ENCODE measurements at regions of chr12 and their contacts with region 1.

Region 1: DNA sequence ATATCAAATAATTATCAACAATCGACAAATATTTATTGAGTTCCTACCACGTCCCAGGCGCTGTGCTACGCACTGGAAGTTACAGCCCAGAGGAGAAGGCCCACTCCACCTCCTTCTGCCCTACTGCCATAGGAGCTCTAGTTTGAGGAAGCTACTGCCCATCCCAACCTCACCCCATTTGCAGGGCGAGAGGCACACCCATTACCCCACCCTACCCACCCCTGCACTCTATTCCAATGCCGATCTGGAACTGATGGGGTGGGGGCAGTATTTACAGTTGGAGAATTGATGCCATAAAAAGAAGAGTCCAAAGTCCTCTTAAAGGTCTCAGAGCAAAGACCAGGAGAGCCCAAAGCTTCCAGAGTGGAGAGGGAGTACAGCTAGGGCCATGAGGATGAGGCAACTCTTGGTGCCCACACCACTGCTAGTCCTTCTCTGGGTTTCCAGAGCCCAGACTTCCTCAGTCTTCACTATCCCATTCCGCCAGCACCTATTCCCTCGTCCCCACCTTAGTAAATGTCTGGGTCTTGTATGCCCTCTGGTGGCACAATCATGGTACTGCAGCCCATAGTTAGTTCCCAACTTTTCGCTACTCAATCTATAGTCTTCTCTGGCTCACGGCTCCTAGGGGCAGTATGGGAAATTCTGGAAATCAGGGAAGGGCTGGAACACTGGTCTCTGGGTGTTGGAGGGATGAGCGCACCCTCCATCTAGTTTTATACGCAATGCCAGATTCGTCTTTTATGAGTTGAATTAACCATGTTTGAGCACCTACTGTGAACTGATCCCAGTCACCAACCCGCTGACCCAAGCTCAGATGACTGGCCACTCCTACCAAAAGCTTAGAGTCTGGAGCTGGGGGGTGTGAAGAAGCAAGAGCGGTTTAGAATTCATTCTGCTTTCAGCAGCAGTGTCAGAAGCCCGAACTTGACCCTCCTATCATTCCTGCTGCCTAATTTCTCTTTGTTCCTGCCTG is 6.9 kb upstream of the ADCY6 start:
- DNase-seq: peak; percentile 80
- CTCF ChIP-seq: peak; percentile 91

Region 2: GRCh38 chr12:48567731-48568130 is 228.0 kb before region 1 on chr12:
- CTCF ChIA-PET with region 1: no interaction called
- POLR2A ChIA-PET with region 1: no interaction called
- DNase-seq: no peak
- CTCF ChIP-seq: no peak

Region 3: GRCh38 chr12:48750769-48751735 is 44.7 kb before region 1 on chr12:
- CTCF ChIA-PET with region 1: interaction called, 236 read pairs
- POLR2A ChIA-PET with region 1: no interaction called
- DNase-seq: no peak
- CTCF ChIP-seq: no peak

Region 4: GRCh38 chr12:48779869-48780268 is 15.9 kb before region 1 on chr12:
- CTCF ChIA-PET with region 1: interaction called, 57 read pairs
- POLR2A ChIA-PET with region 1: no interaction called
- DNase-seq: no peak
- CTCF ChIP-seq: no peak

Region 5: DNA sequence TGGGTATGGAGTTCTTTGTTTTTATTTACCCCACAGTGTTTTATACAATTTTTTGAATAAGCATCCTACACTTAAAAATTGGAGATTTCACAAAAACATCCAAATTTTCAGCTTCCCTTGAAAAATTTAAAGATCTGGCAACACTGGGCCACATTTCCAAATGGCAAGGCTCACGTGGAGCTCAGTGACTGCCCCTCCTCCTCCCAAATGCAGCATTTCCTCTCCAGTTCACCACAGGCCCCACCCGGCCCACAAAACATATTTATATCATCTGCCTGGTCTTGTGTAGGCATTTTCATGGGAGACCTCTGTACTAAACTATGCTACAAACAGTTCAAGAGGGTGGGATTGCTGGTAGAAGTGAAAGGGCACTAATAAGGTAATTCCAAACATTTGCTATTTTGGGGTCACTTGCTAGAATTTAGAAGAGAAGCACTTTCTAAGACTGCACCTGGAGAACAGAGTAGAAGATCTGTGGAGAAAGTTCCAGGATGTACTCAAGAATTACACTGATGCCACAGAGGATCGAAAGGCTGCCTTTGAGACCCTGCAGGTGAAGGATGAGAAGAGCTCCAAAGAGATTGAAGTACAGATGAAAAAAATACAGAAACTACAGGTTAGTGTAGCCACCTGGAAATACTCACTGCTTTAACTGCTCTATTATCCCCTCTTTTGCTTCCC is 122.2 kb after region 1 on chr12:
- CTCF ChIA-PET with region 1: no interaction called
- POLR2A ChIA-PET with region 1: no interaction called
- DNase-seq: no peak
- CTCF ChIP-seq: no peak